Posterior vena cava (tissue), 2 donors: ENCODE measurements at regions of chr16 and their contacts with region 1.

Region 1: DNA sequence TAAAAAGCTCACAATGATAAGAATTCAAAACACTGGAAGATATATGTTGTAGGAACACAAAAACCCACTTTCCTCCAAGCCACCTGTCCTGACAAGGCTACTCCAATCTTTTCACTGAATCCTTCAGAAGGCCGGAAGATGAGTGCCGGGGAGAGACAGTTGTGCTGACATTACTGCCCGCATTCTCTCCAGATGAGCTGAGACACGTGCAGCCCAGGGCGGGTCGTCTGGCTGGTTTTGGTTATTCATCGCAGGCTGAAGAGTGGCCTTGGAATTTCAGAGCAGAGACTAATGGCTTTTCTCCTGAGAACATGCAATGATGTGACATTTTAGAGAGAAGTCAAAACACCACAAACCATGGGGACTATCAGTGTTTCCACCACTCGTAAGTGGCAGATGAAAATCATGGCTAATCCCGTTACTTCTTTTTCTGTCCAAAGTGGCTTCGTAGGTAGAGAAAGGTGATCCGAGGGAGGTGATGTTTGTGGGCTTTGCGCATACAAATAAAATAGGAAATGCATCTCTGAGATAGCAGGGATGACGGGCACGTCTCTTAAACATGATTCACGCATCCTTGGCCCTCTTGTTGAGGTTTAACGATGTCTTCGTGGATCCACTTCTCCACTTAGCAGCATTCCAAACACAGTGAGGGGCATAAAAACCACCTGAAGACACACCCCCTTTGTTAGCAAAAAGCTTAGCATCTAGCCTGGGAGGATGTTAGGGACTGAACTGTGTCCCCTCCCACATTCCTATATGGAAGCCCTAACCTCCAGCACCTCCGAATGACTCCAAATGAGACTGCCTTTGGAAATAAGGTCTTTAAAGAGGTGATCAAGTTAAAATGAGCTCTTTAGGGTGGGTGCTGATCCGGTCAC is 134.0 kb downstream of the IRX3 start:
- DNase-seq: no peak

Region 2: GRCh38 chr16:54226296-54227010 is 73.9 kb after region 1 on chr16:
- intact Hi-C with region 1: loop called in 1 of 2 experiments (anchors 2 kb)
- DNase-seq: no peak

Region 3: DNA sequence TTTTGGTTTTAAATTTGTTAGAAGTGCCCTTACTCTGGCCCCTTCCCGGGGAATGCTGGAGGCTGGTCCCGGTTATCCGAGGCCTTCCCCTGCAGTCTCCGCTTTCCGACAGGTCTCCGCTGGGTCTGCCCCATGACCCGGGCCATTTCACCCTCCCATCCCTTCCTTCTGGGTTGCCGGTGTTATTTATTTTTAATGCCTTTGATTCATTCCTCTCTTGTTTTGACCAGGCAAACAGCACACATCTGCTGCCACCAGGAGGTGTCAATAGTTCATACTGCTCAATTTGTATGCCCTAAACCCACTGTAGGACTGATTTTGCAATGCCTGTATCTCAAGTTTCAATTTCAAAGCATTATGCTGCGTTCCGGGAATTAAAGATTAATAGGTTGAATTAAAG is 664.8 kb after region 1 on chr16:
- intact Hi-C with region 1: no loop called
- DNase-seq: no peak